CD8-positive, alpha-beta memory T cell (primary cell): ENCODE measurements at regions of chr11 and their contacts with region 1.

Region 1: DNA sequence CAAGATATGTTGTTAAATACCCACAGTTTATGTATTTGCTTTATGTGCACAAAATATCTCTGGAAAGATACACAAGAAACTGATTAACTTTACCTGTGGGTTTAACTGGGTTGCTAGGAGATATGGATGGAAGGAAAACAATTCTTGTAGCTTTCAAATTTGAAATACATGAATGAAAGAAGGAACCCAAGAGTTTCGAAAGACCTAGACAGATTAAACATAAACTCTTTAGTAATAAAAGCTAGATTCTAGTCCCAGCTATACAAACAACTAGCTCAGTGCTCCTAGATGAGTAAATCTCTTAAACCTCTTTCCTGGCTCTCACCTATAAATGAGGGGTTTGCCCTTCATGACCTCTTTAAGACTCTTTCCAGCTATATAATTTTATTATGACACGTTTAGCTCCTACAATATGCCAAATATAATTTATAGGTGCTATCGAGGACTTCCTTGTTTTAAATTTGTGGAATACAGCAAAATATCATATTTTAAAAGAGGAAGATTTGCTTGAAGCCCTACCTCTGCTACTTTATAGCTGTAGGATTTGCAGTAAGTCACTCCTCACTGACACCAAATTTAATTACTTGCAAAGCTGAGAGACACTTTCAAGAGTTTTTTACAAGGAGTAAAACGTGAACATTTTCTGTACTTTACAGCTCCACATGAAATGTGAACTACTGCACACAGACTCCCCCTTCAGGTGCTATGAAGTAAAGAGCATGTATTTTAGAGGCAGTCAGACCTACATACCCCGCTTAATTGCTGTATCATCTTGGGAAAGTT is 50.7 kb downstream of the RRAS2 start:
- DNase-seq: peak in 2 of 5 donors; percentile 18 to 23
- H3K4me3 ChIP-seq: no peak overlapping the region
- H3K4me3 Mint-ChIP-seq: no peak overlapping the region
- H3K27ac ChIP-seq: no peak overlapping the region
- H3K27ac Mint-ChIP-seq: no peak overlapping the region
- H3K4me1 ChIP-seq: peaks cover 20% of the 10 kb centered on the region
- H3K4me1 Mint-ChIP-seq: peaks cover 35 to 39% (median 37%) of the 10 kb centered on the region in 3 donors
- H3K27me3 ChIP-seq: no peaks in the 10 kb centered on the region
- H3K27me3 Mint-ChIP-seq: no peaks in the 10 kb centered on the region

Region 2: DNA sequence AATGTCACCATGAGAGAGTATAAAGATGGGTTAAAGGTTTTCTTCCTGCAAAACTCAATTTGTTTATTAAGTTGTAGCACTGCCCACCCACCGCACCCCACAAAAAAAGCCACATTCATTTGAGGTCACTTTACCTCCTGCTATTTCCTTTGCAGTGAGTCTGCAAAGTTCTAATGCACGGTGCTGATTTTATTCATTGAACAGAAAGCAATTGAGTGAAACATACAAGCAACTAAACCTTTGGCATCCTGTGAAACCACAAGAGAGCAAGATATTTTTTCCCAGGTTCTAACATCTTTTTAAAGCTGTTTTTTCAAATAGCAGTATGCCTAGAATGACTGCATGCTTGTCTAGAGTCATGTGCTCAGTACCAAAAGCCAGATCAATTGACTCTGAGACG is 11.7 kb after region 1 on chr11:
- CTCF ChIA-PET with region 1: interaction called, 17 read pairs
- POLR2A ChIA-PET with region 1: interaction called, 4 read pairs
- DNase-seq: peak; percentile 20 to 71 (median 55)
- H3K4me3 ChIP-seq: no peak overlapping the region
- H3K4me3 Mint-ChIP-seq: peak overlapping the region; percentile 4 to 71 (median 59)
- H3K27ac ChIP-seq: no peak overlapping the region
- H3K27ac Mint-ChIP-seq: peak overlapping the region in 6 of 8 donors; percentile 0 to 63 (median 31)
- H3K4me1 ChIP-seq: peaks cover 30% of the 10 kb centered on the region
- H3K4me1 Mint-ChIP-seq: peaks cover 81 to 95% (median 90%) of the 10 kb centered on the region in 3 donors
- H3K27me3 ChIP-seq: no peaks in the 10 kb centered on the region
- H3K27me3 Mint-ChIP-seq: no peaks in the 10 kb centered on the region